Mammary epithelial cell (primary cell): ENCODE measurements at regions of chr3 and their contacts with region 1.

Region 1: GRCh38 chr3:195385526-195385925 is 57.3 kb downstream of the ACAP2 start:
- DNase-seq: peak; percentile 3
- H3K4me3 ChIP-seq: no peak overlapping the region
- H3K27ac ChIP-seq: no peak overlapping the region
- H3K4me1 ChIP-seq: peaks cover 9% of the 10 kb centered on the region
- H3K27me3 ChIP-seq: no peaks in the 10 kb centered on the region
- CTCF ChIP-seq: no peak

Region 2: DNA sequence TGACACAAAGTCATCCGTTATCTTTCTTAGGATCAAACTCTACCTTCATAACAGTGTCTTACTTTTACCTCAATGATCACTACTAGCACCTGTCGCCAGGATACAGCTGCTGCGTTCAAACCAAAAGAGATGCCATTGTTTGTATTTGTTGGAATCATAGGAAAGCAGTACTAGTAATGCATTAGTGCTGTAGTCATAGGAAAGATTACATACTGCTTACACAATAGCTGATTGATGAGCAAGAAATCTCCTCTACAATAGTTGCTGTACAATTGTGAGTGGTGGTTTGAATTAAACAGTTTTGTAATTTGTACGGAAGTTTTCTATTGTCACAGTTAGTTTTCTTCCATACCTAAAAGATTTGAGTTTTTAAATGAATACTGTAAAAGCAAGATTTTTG is 35.9 kb after region 1 on chr3:
- CTCF ChIA-PET with region 1: no interaction called
- dilution Hi-C with region 1: no loop called
- in situ Hi-C with region 1: no loop called
- intact Hi-C with region 1: loop called (anchors 5 kb)
- DNase-seq: no peak
- H3K4me3 ChIP-seq: no peak overlapping the region
- H3K27ac ChIP-seq: no peak overlapping the region
- H3K4me1 ChIP-seq: peaks cover 4% of the 10 kb centered on the region
- H3K27me3 ChIP-seq: no peaks in the 10 kb centered on the region
- CTCF ChIP-seq: no peak